Activated naive CD4-positive, alpha-beta T cell treated with anti-CD3 and anti-CD28 coated beads for 36 hours (primary cell): ENCODE measurements at regions of chr15 and their contacts with region 1.

Region 1: DNA sequence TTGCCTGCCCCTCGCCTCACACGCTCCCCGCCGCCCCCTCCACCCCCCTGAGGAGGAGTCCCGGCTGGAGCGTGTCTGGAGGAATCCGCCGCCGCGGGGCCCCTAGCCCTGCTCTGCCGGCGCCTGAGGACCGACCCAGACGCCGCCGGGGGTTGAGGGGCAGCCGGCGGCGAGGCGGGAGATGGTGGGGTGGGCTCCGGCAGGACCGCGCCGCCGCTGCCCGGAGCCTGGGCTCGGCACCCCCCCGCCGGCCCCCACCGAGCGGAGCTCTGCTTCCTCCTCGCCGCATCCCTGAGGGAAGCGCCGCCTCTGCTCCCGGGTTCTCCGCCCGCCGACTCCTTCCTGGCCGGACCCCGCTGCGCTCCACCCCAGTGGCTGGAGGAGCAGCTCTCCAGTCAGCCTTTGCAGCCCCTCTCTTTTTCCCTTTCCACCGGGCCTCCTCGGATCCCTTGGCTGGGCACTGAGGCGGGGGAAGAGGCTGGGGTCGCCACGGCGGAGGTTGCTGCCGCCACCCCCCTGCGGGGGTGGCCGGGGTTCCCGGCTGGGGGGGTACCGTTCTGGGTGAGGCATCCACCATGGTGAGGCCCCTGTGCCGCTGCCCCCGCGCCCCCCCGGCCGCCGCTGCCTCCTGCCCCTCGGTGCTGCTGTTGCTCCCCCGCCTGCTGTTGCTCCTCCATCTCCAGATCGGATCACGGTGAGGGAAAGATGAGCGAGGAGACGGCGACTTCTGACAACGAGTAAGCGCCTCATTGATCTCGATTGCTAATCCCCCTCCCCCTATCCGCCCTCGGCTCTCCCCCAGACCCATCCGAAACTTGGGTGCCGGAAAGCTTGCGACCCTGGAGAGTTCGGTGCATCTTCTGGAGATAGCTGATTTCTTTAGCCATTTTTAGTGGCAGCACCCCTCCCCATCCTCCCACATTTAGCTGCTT is at the start of gene SPRED1:
- DNase-seq: peak; percentile 30
- H3K4me3 Mint-ChIP-seq: peak within 1 kb of the TSS; percentile 84
- H3K27ac Mint-ChIP-seq: no peak within 1 kb of the TSS
- H3K4me1 Mint-ChIP-seq: peaks cover 19% of the 10 kb centered on the region
- H3K27me3 Mint-ChIP-seq: peaks cover 13% of the 10 kb centered on the region
- total RNA-seq, gene SPRED1: 0.62 to 0.74 TPM

Region 2: DNA sequence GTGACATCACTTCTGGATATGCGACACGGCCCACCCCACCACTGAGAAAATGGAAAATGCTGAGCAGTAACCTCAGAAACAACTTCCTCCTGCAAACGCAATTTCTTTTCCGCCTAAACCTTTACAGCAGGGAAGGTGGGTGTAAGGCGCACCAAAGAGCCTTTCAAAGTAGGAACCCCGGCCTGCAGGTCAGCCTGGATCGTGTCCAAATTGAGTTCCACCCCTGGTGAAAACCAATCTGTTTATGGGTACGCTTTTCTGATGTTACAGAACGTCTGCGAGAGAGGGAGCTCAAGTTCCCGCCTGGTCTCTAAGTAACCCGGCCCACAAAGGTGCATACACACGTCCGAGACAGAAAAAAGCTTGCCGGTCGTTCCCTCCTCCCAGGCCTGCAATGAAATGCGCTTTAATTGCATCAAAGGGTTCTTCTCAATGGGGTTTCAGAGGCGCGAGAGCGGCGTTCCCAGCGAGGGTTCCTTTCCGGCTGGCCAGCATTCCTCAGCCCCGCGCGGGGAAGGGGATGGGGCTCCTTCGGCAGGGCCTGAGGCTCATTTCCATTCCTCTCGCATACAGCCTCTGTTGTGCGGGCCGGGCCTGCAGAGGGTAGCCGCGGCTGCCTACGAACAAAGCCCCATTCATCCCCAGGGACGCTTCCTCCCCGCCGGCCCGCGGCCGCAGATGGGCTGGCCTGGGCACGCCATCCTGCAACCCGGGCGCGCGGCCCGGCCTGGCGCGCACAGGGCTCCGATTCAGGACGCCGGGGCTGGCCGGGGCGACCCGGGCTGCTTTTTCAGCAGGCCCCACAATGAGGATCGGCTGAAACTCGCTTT is 180.2 kb before region 1 on chr15:
- CTCF ChIA-PET with region 1: no interaction called
- intact Hi-C with region 1: loop called (anchors 1 kb)
- DNase-seq: peak; percentile 47
- H3K4me3 Mint-ChIP-seq: peak overlapping the region; percentile 44
- H3K27ac Mint-ChIP-seq: no peak overlapping the region
- H3K4me1 Mint-ChIP-seq: peaks cover 34% of the 10 kb centered on the region
- H3K27me3 Mint-ChIP-seq: peaks cover 65% of the 10 kb centered on the region

Region 3: GRCh38 chr15:38220606-38221265 is 32.0 kb before region 1 on chr15:
- CTCF ChIA-PET with region 1: no interaction called
- intact Hi-C with region 1: no loop called
- DNase-seq: no peak
- H3K4me3 Mint-ChIP-seq: no peak overlapping the region
- H3K27ac Mint-ChIP-seq: no peak overlapping the region
- H3K4me1 Mint-ChIP-seq: peaks cover 2% of the 10 kb centered on the region
- H3K27me3 Mint-ChIP-seq: peaks cover 3% of the 10 kb centered on the region

Region 4: DNA sequence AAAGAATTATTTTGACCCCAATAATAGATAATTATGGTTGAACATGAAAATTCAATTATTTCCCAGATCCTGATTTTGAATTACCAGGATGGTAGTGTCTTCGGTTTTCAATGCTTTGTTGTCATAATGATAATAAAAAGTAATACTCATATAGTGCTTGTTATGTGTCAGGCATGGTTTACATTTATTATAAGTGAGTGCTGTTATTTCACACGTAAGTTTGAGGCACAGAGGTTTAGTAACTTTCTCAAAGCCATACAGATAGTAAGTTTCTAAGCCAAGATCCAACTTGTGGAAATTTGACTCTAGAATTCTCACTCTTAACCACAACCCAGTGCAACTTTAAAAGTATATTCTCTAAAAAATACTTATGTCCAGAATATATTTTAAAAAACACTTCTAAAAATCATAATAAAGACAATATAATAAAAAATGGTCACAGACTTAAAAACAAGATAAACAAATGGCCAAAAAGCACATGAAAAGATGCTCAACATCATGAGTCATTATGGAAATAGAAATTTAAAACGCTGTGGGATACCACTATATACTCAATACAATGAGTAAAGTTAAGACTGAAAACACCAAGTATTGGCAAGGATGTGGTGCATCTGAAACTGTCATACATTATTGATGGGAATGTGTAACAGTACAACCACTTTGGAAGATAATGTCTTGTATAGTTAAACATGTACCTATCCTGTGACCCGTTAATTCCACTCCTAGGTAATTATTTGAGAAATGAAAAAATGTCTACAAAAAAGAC is 45.1 kb after region 1 on chr15:
- CTCF ChIA-PET with region 1: no interaction called
- intact Hi-C with region 1: no loop called
- DNase-seq: no peak
- H3K4me3 Mint-ChIP-seq: no peak overlapping the region
- H3K27ac Mint-ChIP-seq: no peak overlapping the region
- H3K4me1 Mint-ChIP-seq: no peaks in the 10 kb centered on the region
- H3K27me3 Mint-ChIP-seq: no peaks in the 10 kb centered on the region

Region 5: GRCh38 chr15:38354315-38354929 is 101.7 kb after region 1 on chr15:
- CTCF ChIA-PET with region 1: no interaction called
- intact Hi-C with region 1: loop called (anchors 1 kb)
- DNase-seq: peak; percentile 75
- H3K4me3 Mint-ChIP-seq: no peak overlapping the region
- H3K27ac Mint-ChIP-seq: no peak overlapping the region
- H3K4me1 Mint-ChIP-seq: no peaks in the 10 kb centered on the region
- H3K27me3 Mint-ChIP-seq: peaks cover 4% of the 10 kb centered on the region

Region 6: DNA sequence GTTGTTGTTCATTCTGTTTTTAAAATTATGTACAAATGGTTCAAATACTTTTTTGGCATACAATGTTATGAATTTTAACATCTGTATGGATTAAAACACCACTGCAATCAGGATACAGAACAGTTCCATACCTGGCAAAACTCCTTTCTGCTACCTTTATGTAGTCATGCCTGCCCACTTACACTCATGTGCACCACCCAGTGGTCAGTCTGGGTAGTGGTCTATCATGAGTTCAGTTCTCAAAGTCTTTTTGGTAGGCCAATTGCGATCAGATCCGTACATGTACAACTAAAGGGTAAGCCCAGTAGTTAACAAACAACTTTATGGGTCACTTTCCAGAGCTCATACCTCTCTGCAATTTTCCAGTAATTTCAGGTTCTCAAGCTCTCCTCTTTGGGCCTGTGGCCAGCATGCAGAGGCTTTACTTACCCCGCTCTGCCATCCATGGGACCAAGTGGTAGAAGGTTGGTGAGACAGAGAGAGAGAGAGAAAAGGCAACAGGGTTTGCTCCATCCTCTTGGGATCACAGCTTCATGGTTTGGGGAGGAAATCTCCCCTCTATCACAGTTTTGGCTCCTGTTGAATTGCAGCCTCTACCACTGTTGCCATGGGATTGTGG is 137.3 kb after region 1 on chr15:
- CTCF ChIA-PET with region 1: interaction called, 6 read pairs
- intact Hi-C with region 1: loop called (anchors 1 kb)
- DNase-seq: peak; percentile 80
- H3K4me3 Mint-ChIP-seq: no peak overlapping the region
- H3K27ac Mint-ChIP-seq: no peak overlapping the region
- H3K4me1 Mint-ChIP-seq: no peaks in the 10 kb centered on the region
- H3K27me3 Mint-ChIP-seq: peaks cover 16% of the 10 kb centered on the region

Region 7: GRCh38 chr15:38536201-38536676 is 283.5 kb after region 1 on chr15:
- CTCF ChIA-PET with region 1: no interaction called
- intact Hi-C with region 1: loop called (anchors 10 kb)
- DNase-seq: no peak
- H3K4me3 Mint-ChIP-seq: no peak overlapping the region
- H3K27ac Mint-ChIP-seq: peak overlapping the region; percentile 26
- H3K4me1 Mint-ChIP-seq: peaks cover 96% of the 10 kb centered on the region
- H3K27me3 Mint-ChIP-seq: no peaks in the 10 kb centered on the region

Region 8: DNA sequence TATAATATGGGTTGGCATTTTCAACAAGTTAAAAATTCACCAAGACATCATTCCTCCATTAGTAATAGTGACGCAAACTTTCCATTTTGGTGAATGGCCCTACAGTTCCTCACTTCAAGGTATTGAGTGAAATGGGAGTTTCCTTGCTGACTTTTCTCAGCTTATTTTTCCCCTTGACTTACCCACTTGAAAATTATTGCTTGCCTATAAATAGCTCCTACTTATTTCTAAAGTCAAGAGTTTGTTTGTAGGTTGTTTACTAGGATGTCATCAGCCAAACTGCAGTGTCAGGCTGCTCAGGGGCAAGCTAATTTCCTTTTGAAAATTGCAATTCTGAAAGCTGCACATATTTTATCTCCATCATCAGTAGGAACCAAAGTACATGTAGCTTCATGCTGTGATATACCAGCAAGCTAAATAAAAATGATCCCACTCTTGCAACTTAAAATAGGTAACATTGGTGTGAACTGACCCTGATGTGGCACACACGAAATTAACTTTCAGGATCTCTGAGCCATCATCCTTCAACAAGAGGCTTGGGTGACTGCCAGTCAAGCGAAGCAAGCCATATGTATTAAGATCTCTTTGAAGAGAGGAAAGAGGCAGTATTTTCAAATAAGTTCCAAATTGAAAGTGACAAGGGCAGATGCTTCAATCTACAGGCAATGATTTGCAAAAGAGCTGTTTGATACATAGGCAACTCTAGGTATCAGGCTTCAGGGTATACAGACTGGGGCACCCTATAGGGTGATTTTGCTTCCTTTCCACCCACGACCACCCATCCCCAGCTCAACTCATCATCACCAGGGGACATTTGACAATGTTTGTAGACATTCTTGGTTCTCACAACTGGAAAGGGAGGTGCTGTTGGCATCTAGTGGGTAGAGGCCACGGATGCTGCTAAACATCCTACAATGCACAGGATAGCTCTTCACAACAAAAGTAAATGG is 378.7 kb after region 1 on chr15:
- CTCF ChIA-PET with region 1: no interaction called
- intact Hi-C with region 1: no loop called
- DNase-seq: peak; percentile 27
- H3K4me3 Mint-ChIP-seq: peak overlapping the region; percentile 30
- H3K27ac Mint-ChIP-seq: peak overlapping the region; percentile 85
- H3K4me1 Mint-ChIP-seq: peaks cover 50% of the 10 kb centered on the region
- H3K27me3 Mint-ChIP-seq: no peaks in the 10 kb centered on the region